Activated B cell treated with CpG ODN at 0.5 μM for 24 hours (primary cell): ENCODE measurements at regions of chr7 and their contacts with region 1.

Region 1: DNA sequence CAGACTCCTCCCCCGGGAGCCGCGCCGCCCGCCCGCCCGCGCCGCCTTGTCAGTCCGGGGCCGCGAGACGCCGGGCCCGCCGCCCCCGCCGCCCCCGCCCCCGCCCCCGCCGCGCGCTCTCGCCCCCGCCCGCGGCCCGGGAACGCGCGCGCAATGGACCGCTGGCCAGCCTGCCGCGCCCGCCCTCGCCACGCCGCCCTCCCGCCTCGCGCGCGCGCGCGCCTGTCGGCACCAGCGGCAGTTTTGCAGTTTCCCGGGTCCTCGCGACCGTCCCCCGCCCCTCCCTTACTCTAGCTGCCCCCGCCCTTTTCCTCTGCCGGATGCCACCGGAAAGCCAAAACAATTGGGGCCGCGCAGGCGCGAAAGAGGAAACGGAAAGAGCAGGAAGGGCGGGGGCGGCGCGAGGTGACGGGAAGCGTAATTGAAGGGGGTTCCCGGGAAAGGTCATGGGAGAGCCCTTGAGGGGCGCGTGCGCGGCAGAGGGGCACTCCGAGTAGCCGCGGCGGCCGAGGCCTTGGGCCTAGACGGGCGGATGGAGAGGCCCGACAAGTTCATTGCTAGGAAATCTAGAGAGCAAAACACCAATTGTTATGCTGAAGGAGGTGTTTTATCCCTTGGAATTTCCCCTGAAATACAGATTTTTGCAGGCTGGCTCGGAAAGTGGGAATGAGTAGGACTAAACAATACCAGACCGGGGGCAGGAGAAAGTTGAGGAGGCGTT is 400 bp upstream of the KBTBD2 start:
- DNase-seq: peak; percentile 96
- ATAC-seq: peak; percentile 66
- H3K4me3 Mint-ChIP-seq: peak overlapping the region; percentile 91
- H3K27ac Mint-ChIP-seq: peak overlapping the region; percentile 97
- H3K4me1 Mint-ChIP-seq: peaks cover 56% of the 10 kb centered on the region
- H3K27me3 Mint-ChIP-seq: no peaks in the 10 kb centered on the region
- CTCF ChIP-seq: no peak

Region 2: DNA sequence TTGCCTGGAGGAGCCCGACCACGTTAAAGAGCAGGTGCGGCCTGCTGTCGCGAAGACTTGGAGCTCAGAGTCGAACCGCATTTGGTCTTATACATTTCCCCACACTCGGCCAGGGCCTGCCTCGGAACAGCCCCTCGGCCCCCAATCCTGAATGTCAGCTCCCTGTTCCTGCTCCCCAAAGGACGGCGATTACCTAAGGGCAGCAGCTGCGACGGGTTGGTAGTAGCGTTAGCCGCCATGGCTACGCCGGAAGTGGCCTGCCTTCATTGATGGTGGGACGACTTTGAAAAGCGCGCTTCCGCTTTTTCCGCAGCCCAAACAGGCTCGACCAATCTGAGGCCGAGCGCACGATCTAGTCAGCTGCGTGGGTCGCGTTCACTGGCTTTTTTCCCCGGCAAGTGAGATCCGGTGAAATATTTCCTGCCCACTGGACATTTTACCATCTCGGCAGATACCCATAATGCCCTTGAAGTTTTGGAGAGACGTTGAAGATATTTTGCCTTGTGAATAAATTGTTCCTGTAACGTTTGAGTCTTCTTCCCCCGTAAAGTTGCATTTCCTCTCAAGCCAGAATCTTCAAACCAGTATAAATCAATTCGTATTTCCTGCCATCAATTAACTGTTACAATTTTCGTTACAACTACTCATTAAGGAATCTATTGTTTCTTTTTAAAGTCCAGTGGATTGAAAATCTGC is 401.7 kb before region 1 on chr7 and contains the start of gene LSM5:
- CTCF ChIA-PET with region 1: no interaction called
- POLR2A ChIA-PET with region 1: interaction called, 13 read pairs
- intact Hi-C with region 1: loop called (anchors 1 kb)
- DNase-seq: peak; percentile 82
- ATAC-seq: peak; percentile 60
- H3K4me3 Mint-ChIP-seq: peak within 1 kb of the TSS; percentile 95
- H3K27ac Mint-ChIP-seq: peak within 1 kb of the TSS; percentile 93
- H3K4me1 Mint-ChIP-seq: peaks cover 24% of the 10 kb centered on the region
- H3K27me3 Mint-ChIP-seq: no peaks in the 10 kb centered on the region
- CTCF ChIP-seq: no peak
- total RNA-seq, gene LSM5: 47.1 and 53.3 TPM in 2 replicates

Region 3: GRCh38 chr7:32860090-32860489 is 31.9 kb before region 1 on chr7:
- CTCF ChIA-PET with region 1: no interaction called
- POLR2A ChIA-PET with region 1: no interaction called
- intact Hi-C with region 1: no loop called
- DNase-seq: no peak
- ATAC-seq: no peak
- H3K4me3 Mint-ChIP-seq: no peak overlapping the region
- H3K27ac Mint-ChIP-seq: no peak overlapping the region
- H3K4me1 Mint-ChIP-seq: peaks cover 2% of the 10 kb centered on the region
- H3K27me3 Mint-ChIP-seq: peaks cover 4% of the 10 kb centered on the region
- CTCF ChIP-seq: no peak

Region 4: DNA sequence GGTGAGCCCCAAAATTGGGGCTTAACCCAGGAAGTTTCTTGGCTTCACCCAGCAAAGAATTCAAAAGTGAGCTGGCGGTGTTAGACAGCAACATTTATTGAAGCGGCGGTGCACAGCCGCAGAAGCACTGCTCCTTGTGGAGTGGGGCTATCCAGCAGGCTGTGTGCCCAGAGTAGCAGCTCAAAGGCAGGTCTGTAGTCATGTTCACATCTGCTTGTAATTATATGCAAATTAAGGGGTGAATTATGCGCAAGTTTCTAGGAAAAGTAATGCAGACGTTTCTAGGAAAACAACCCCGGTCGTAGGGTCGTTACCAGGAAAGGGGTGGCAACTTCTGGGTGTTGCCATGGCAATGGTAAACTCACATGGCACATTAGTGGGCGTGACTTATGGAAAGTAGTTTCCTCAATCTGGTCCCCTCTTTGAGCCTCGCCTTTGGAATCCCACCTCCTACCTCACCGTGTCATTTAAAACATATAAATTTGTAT is 13.3 kb after region 1 on chr7:
- CTCF ChIA-PET with region 1: no interaction called
- POLR2A ChIA-PET with region 1: interaction called, 30 read pairs
- intact Hi-C with region 1: loop called (anchors 1 kb)
- DNase-seq: no peak
- ATAC-seq: peak; percentile 85
- H3K4me3 Mint-ChIP-seq: peak overlapping the region; percentile 73
- H3K27ac Mint-ChIP-seq: peak overlapping the region; percentile 69
- H3K4me1 Mint-ChIP-seq: peaks cover 7% of the 10 kb centered on the region
- H3K27me3 Mint-ChIP-seq: no peaks in the 10 kb centered on the region
- CTCF ChIP-seq: no peak

Region 5: GRCh38 chr7:33040803-33041516 is 149.0 kb after region 1 on chr7:
- CTCF ChIA-PET with region 1: no interaction called
- POLR2A ChIA-PET with region 1: interaction called, 10 read pairs
- intact Hi-C with region 1: loop called (anchors 1 kb)
- DNase-seq: no peak
- ATAC-seq: peak; percentile 98
- H3K4me3 Mint-ChIP-seq: peak overlapping the region; percentile 79
- H3K27ac Mint-ChIP-seq: peak overlapping the region; percentile 81
- H3K4me1 Mint-ChIP-seq: peaks cover 75% of the 10 kb centered on the region
- H3K27me3 Mint-ChIP-seq: no peaks in the 10 kb centered on the region
- CTCF ChIP-seq: no peak

Region 6: DNA sequence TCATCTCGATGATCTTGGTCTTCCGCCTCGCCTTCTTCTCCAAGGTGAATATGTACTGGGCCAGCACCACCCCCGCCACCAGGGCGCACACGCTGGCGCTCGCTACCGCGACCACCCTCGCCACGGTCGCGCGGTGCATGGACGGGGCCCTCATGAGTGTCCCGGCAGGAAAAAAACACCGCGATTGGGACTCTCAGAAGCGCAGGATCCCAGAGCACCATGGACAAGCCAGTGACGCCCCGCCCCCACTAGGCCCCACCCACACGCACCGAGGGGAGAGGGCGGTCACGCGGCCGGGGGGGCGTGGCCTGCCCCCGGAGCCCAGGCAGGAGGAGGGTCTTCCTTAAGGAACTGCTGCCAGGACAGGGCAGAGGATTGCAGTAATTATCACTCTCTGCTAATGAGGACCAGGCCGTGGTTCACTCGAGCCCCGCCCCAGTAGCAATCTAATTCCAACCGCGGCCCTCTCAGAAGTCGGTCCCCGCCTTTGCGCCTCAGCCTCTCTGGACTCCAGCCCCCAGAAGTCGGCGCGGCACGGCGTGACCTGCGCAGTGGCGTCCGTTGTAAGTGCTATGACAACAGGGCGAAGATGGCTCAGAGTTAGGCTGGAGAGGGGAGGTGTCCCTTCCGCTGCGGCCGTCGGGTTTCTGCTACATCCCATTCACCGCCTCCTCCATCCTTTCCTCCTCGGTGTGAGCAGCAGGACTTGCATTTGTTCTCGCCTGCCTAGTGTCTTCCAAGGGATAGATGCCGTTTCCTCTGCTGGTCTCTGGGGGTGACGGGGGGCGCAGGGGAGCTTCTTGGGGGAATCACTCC is 237.2 kb after region 1 on chr7 and contains the start of gene BBS9:
- CTCF ChIA-PET with region 1: no interaction called
- POLR2A ChIA-PET with region 1: no interaction called
- intact Hi-C with region 1: loop called (anchors 1 kb)
- DNase-seq: peak; percentile 90
- ATAC-seq: peak; percentile 92
- H3K4me3 Mint-ChIP-seq: peak within 1 kb of the TSS; percentile 94
- H3K27ac Mint-ChIP-seq: peak within 1 kb of the TSS; percentile 92
- H3K4me1 Mint-ChIP-seq: peaks cover 18% of the 10 kb centered on the region
- H3K27me3 Mint-ChIP-seq: no peaks in the 10 kb centered on the region
- CTCF ChIP-seq: no peak
- total RNA-seq, gene BBS9: 18.3 and 18.6 TPM in 2 replicates